ENCODE measurements at regions of chr1 and their contacts with region 1.

Region 1: DNA sequence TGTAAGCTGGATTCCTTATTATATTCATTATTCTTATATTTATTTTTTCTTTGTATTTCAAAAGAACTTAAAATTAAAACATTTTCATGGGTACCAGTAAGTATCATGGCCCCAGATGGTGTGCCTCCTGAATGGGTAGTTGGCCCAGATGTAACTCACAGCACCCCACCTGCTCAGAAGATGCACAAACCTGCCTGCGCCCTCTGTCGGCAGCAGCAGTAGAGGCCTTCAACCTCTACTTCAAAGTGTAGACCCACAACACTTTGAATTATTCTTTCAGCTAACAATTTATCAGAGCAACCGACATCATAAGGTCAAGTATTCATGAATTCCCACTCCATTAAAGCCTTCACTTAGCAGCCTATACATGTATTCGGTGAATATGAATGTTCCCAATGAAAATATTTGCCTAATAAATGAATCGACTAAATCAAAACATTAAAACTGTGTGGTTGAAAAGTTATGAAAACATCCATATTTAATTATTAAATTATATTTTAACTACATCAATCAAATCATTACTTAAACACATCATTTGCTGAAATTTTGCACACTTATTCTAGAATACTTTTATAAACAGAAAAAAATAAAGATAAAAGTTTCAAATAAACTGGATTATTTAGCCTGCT is 25.4 kb downstream of the PIGM start:
- DNase-seq: peak; percentile 89
- ATAC-seq: peak; percentile 94
- H3K4me3 ChIP-seq: no peak overlapping the region
- H3K27ac ChIP-seq: no peak overlapping the region
- H3K4me1 ChIP-seq: no peaks in the 10 kb centered on the region; the same call in 1 of the 2 replicates
- H3K27me3 ChIP-seq: no peaks in the 10 kb centered on the region
- CTCF ChIP-seq: peak; percentile 97

Region 2: DNA sequence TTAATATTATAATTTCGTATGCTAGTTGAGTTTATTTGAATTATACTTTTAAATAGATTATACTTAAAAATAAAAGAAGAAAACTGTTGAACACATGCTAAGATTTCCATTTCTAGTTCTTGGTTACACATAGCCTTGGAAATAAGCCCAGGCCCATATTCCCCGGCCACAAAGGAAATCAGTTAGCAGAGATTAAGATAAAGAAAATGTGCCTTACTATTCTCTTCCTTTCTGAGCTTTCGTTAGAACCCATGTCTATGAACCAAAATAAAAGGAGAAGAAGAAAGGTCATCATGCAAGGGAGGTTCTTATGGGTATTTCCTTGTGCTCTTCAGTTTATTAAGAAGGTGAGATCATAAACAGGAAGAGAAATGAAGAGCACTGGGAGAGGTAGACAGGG is 259.8 kb before region 1 on chr1:
- CTCF ChIA-PET with region 1: interaction called, 16 read pairs
- POLR2A ChIA-PET with region 1: no interaction called
- intact Hi-C with region 1: no loop called
- DNase-seq: no peak
- ATAC-seq: no peak
- H3K4me3 ChIP-seq: no peak overlapping the region
- H3K27ac ChIP-seq: no peak overlapping the region
- H3K4me1 ChIP-seq: no peaks in the 10 kb centered on the region
- H3K27me3 ChIP-seq: peaks cover 57% of the 10 kb centered on the region
- CTCF ChIP-seq: no peak

Region 3: GRCh38 chr1:159780583-159781582 is 225.5 kb before region 1 on chr1 and contains the start of gene DUSP23:
- CTCF ChIA-PET with region 1: no interaction called
- POLR2A ChIA-PET with region 1: no interaction called
- intact Hi-C with region 1: loop called (anchors 1 kb)
- DNase-seq: peak; percentile 95
- ATAC-seq: peak; percentile 95
- H3K4me3 ChIP-seq: peak within 1 kb of the TSS; percentile 46
- H3K27ac ChIP-seq: no peak within 1 kb of the TSS
- H3K4me1 ChIP-seq: peaks cover 19% of the 10 kb centered on the region
- H3K27me3 ChIP-seq: no peaks in the 10 kb centered on the region
- CTCF ChIP-seq: peak; percentile 90
- total RNA-seq, gene DUSP23: 20.4 and 27.6 TPM in 2 replicates

Region 4: DNA sequence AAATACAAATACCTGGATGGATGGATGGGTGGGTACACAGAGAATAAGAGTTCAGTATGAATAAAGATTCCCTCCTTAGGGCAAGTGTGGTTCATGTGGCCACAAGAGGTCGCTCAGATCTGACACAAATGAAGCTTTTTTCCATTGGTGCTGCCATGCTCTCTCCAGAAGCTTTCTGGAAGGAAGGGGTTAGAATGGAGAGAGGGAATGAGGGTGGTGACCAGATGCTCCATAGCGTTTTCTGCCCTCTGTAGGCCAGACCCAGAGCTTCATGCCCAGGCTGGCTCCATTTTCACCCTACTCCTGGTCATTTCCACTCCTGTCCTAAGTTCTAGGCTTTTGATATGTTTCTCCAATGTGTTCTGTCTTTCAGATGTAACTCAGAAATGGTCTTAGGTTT is 207.5 kb before region 1 on chr1:
- CTCF ChIA-PET with region 1: interaction called, 34 read pairs
- POLR2A ChIA-PET with region 1: no interaction called
- intact Hi-C with region 1: loop called (anchors 1 kb)
- DNase-seq: peak; percentile 92
- ATAC-seq: peak; percentile 94
- H3K4me3 ChIP-seq: no peak overlapping the region
- H3K27ac ChIP-seq: no peak overlapping the region
- H3K4me1 ChIP-seq: peaks cover 3% of the 10 kb centered on the region; the same call in 1 of the 2 replicates
- H3K27me3 ChIP-seq: peaks cover 33% of the 10 kb centered on the region
- CTCF ChIP-seq: peak; percentile 98

Region 5: GRCh38 chr1:159936273-159936904 is 70.0 kb before region 1 on chr1:
- CTCF ChIA-PET with region 1: interaction called, 21 read pairs
- POLR2A ChIA-PET with region 1: no interaction called
- intact Hi-C with region 1: loop called (anchors 1 kb)
- DNase-seq: peak; percentile 93
- ATAC-seq: peak; percentile 59
- H3K4me3 ChIP-seq: no peak overlapping the region
- H3K27ac ChIP-seq: peak overlapping the region; percentile 51
- H3K4me1 ChIP-seq: peaks cover 36% of the 10 kb centered on the region
- H3K27me3 ChIP-seq: no peaks in the 10 kb centered on the region
- CTCF ChIP-seq: peak; percentile 94

Region 6: GRCh38 chr1:159945483-159946241 is 60.8 kb before region 1 on chr1 and contains the start of gene IGSF9:
- CTCF ChIA-PET with region 1: interaction called, 14 read pairs
- POLR2A ChIA-PET with region 1: no interaction called
- intact Hi-C with region 1: loop called (anchors 2 kb)
- DNase-seq: peak; percentile 99
- ATAC-seq: peak; percentile 92
- H3K4me3 ChIP-seq: peak within 1 kb of the TSS; percentile 84
- H3K27ac ChIP-seq: peak within 1 kb of the TSS; percentile 83
- H3K4me1 ChIP-seq: peaks cover 42% of the 10 kb centered on the region
- H3K27me3 ChIP-seq: no peaks in the 10 kb centered on the region
- CTCF ChIP-seq: peak; percentile 82
- total RNA-seq, gene IGSF9: 15.6 and 19.9 TPM in 2 replicates

Region 7: GRCh38 chr1:159960721-159961381 is 45.6 kb before region 1 on chr1:
- CTCF ChIA-PET with region 1: interaction called, 3 read pairs
- POLR2A ChIA-PET with region 1: no interaction called
- intact Hi-C with region 1: loop called (anchors 1 kb)
- DNase-seq: peak; percentile 85
- ATAC-seq: peak; percentile 91
- H3K4me3 ChIP-seq: no peak overlapping the region
- H3K27ac ChIP-seq: peak overlapping the region; percentile 61
- H3K4me1 ChIP-seq: peaks cover 23% of the 10 kb centered on the region
- H3K27me3 ChIP-seq: no peaks in the 10 kb centered on the region
- CTCF ChIP-seq: no peak

Measured in PC-3 (cell line).